ENCODE measurements at regions of chr1 and their contacts with region 1.

Region 1: DNA sequence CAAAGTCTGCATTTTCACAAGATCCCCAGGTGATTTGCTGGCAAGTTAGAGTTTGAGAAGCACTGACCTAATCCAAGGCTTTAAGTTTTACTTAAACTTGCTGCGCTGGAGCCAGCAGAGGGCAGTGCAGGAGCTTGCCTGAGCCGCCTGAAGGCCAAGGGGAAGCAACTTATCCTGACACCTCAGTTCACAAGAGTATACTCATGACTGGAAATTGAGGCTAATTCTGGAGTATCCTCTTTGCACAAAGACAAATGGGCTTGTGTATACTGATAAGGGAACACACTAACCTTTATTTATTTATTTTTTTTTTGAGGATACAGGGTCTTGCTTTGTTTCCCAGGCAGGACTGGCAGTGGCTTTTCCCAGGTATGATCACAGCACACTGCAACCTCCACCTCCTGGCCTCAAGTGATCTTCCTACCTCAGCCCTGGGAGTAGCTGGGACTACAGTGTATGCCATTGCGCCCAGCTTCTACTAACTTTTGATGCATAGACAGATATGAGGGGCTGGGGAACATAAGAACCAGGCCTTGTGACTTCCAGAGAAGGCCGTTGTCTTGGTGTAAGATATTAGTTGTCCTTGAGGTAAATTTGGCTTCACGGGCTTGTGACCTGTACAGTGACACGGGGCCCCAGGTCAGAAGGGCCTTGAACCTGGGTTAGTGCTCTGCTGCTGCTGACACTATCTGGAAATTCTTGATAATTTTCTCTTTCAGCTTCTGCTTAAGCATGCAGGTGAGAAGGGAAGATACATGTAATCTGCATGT is 29.0 kb upstream of the SLAMF1 start:
- DNase-seq: peak; percentile 67
- CTCF ChIP-seq: peak; percentile 90

Region 2: GRCh38 chr1:160629286-160630210 is 46.3 kb before region 1 on chr1:
- CTCF ChIA-PET with region 1: interaction called, 17 read pairs
- POLR2A ChIA-PET with region 1: interaction called, 6 read pairs
- DNase-seq: no peak
- CTCF ChIP-seq: no peak

Region 3: GRCh38 chr1:160664573-160665051 is 11.2 kb before region 1 on chr1:
- CTCF ChIA-PET with region 1: interaction called, 48 read pairs
- POLR2A ChIA-PET with region 1: interaction called, 3 read pairs
- DNase-seq: no peak
- CTCF ChIP-seq: no peak

Region 4: GRCh38 chr1:160726498-160727315 is 50.9 kb after region 1 on chr1:
- CTCF ChIA-PET with region 1: interaction called, 50 read pairs
- POLR2A ChIA-PET with region 1: no interaction called
- DNase-seq: peak; percentile 62
- CTCF ChIP-seq: peak; percentile 80

Region 5: GRCh38 chr1:161071886-161072371 is 396.1 kb after region 1 on chr1:
- CTCF ChIA-PET with region 1: no interaction called
- POLR2A ChIA-PET with region 1: no interaction called
- DNase-seq: peak; percentile 80
- CTCF ChIP-seq: peak; percentile 82

Region 6: GRCh38 chr1:161298116-161298515 is 622.3 kb after region 1 on chr1:
- CTCF ChIA-PET with region 1: no interaction called
- POLR2A ChIA-PET with region 1: interaction called, 11 read pairs
- DNase-seq: peak; percentile 66
- CTCF ChIP-seq: no peak